BJ (cell line): ENCODE measurements at regions of chr10 and their contacts with region 1.

Region 1: GRCh38 chr10:69333205-69333604 is 54.9 kb downstream of the HK1 start:
- DNase-seq: no peak
- H3K4me3 ChIP-seq: no peak overlapping the region
- H3K27me3 ChIP-seq: no peaks in the 10 kb centered on the region
- CTCF ChIP-seq: peak; percentile 58

Region 2: GRCh38 chr10:69348816-69349541 is 15.8 kb after region 1 on chr10:
- CTCF ChIA-PET with region 1: interaction called, 12 read pairs
- POLR2A ChIA-PET with region 1: no interaction called
- DNase-seq: peak; percentile 77
- H3K4me3 ChIP-seq: no peak overlapping the region
- H3K27me3 ChIP-seq: no peaks in the 10 kb centered on the region
- CTCF ChIP-seq: no peak

Region 3: DNA sequence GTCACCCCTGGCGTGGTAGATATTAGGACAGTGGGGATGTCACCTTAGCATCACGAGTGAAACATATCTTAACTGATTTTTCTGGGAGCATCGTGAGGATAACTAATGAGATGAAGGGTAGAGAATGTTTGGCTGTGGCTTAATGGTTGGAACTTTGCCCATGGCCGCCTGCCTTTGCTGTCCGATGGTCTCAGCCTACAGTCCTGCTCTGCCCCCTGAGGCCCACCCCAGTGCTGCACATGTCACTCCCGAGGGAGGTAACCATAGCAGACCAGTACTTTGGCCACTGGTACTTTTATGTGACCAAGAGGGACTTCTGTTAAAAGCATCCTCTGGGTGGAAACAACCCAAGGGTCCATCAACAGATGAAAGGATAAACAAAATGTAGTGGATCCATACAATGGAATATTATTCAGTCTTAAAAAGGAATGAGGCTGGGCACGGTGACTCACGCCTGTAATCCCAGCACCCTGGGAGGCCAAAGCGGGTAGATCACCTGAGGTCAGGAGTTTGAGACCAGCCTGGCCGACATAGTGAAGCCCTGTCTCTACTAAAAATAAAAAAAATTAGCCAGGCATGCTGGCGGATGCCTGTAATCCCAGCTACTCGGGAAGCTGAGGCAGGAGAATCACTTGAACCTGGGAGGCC is 25.1 kb after region 1 on chr10:
- CTCF ChIA-PET with region 1: no interaction called
- POLR2A ChIA-PET with region 1: interaction called, 16 read pairs
- DNase-seq: no peak
- H3K4me3 ChIP-seq: no peak overlapping the region
- H3K27me3 ChIP-seq: no peaks in the 10 kb centered on the region
- CTCF ChIP-seq: no peak

Region 4: DNA sequence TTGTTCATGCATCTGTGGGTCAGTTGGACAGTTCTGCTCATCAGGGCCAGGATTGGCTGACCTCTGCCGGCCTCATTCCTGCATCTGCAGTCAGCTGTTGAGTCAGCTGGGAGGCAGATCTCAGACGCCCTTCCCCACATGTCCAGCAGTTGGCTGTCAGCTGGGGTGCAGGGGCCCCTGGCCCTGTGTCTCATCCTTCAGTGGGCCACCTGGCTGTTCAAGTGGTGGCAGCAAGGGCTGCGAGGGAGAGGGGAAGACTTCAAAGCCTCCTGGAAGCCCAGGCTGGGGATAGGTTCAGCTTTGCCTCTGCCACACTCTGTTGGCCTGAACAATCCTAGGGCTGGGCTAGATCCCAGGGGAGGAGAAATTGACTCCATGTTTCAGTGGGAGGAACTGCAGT is 50.4 kb after region 1 on chr10:
- CTCF ChIA-PET with region 1: interaction called, 11 read pairs
- POLR2A ChIA-PET with region 1: no interaction called
- DNase-seq: peak; percentile 22
- H3K4me3 ChIP-seq: no peak overlapping the region
- H3K27me3 ChIP-seq: no peaks in the 10 kb centered on the region
- CTCF ChIP-seq: peak; percentile 44; the same call in 1 of the 2 replicates